Endothelial cell of umbilical vein (primary cell): ENCODE measurements at regions of chr14 and their contacts with region 1.

Region 1: GRCh38 chr14:37594238-37594914 is 673 bp downstream of the FOXA1 start:
- DNase-seq: peak; percentile 80
- H3K4me3 ChIP-seq: peak overlapping the region; percentile 30 to 62 (median 41)
- H3K27ac ChIP-seq: no peak overlapping the region
- H3K4me1 ChIP-seq: peaks cover 4% of the 10 kb centered on the region
- H3K27me3 ChIP-seq: peaks cover 73 to 88% of the 10 kb centered on the region in 2 experiments
- CTCF ChIP-seq: peak; percentile 81 to 89
- POLR2A ChIP-seq: no peak

Region 2: DNA sequence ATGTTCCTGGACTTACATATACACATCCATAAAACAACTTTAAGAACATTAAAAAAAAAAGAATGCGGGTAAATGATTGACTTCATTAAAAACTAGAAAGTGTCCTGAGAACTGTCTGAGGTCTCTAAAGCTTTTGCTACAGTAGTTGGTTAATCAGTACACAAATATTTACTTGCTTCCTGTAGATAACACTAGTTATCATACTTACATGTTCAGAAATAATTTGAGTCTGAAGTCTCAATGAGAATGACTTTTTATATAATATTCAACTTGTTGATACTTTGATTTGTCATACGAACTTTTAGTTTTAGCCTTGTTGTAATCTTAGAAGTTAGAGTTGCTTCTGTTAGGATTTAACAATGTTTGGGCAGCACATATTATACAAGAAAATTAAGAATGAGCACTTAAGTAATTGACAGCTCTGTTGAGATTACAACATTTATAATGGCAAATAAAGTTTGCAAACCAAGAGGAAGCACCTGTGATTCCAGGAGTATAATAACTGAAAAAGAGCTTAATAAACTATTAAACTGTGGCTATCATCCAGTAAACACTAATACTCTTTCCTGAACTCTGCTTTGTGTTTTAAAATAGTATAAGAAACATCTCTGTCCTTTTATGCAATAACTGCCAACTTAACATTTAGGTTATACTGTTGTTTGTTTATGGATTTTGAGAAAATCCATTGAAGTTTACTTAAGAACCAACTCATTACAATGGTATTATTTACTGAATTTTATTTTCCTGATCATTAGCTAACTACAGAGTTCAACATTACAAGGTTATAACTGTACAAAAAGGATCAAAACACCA is 265.0 kb before region 1 on chr14:
- CTCF ChIA-PET with region 1: no interaction called
- POLR2A ChIA-PET with region 1: no interaction called
- dilution Hi-C with region 1: no loop called
- intact Hi-C with region 1: no loop called
- DNase-seq: peak; percentile 72
- H3K4me3 ChIP-seq: no peak overlapping the region
- H3K27ac ChIP-seq: no peak overlapping the region
- H3K4me1 ChIP-seq: peaks cover 7% of the 10 kb centered on the region
- H3K27me3 ChIP-seq: no peaks in the 10 kb centered on the region
- CTCF ChIP-seq: no peak
- POLR2A ChIP-seq: no peak

Region 3: DNA sequence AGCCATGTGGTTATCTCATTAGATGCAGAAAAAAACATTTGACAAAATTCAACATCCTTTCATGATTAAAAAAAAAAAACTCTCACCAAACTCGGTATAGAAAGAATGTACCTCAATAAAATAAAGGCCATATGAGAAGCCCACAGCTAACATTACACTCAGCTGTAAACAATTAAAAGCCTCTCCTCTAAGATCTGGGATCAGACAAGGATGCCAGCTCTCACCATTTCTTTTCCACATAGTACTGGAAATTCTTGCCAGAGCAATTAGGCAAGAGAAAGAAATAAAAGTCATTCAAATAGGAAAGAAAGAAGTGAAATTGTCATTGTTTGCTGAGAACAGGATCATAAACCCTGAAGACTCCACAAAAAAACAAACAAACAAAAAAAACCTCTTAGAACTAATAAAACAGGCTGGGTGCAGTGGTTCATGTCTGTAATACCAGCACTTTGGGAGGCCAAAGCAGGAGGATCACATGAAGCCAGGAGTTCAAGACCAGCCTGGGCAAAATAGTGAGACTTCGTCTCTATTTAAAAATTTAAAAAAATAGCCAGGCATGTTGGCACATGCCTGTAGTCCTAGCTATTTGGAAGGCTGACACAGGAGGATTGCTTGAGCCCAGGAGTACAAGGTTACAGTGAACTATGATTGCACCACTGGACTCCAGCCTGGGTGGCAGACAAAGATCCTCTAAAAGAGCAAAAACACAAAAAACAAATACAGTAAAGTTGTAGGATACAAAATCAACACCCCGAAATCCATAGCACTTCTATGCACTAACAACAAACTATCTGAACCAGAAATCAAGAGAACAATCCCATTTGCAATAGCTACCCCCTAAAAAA is 113.7 kb before region 1 on chr14:
- CTCF ChIA-PET with region 1: no interaction called
- POLR2A ChIA-PET with region 1: no interaction called
- dilution Hi-C with region 1: no loop called
- intact Hi-C with region 1: no loop called
- DNase-seq: no peak
- H3K4me3 ChIP-seq: no peak overlapping the region
- H3K27ac ChIP-seq: no peak overlapping the region
- H3K4me1 ChIP-seq: no peaks in the 10 kb centered on the region
- H3K27me3 ChIP-seq: no peaks in the 10 kb centered on the region
- CTCF ChIP-seq: no peak
- POLR2A ChIP-seq: no peak

Region 4: GRCh38 chr14:37623423-37623951 is 29.1 kb after region 1 on chr14:
- CTCF ChIA-PET with region 1: interaction called, 12 read pairs
- POLR2A ChIA-PET with region 1: no interaction called
- dilution Hi-C with region 1: no loop called
- intact Hi-C with region 1: no loop called
- DNase-seq: peak; percentile 29
- H3K4me3 ChIP-seq: no peak overlapping the region
- H3K27ac ChIP-seq: no peak overlapping the region
- H3K4me1 ChIP-seq: no peaks in the 10 kb centered on the region
- H3K27me3 ChIP-seq: no peaks in the 10 kb centered on the region
- CTCF ChIP-seq: no peak
- POLR2A ChIP-seq: no peak

Region 5: DNA sequence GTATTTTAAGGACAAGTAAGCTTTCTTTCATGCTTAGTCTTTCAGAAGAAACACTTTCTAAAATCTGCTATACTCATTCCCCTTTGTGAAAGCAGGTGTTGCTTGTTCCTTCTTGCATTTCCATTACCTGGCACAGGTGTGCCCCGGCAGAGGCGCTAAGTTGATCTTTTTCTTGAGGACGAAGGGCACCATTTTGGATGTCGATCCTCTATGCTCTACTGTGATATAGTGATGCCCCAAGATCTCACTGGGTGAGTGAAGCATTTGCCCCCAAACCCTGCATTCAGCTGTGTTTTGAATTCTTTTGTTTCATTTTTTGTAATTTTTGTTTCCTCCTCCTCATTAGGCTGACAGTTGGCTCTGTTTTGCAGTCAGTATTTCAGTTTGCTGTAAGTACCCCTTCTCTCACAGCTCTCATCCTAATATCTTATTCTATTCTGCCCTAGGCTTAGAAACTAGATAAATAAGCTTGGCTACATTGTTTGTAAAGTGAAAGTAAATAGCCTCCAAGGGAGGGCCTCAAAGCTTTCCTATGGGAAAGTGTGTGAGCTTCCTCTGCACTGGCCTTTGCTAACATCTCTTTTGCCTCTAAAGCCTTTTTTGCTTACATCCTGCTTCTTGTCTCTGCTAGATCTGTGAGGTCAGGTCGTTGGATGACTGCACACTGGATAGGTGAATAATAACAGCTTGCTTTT is 55.8 kb after region 1 on chr14:
- CTCF ChIA-PET with region 1: no interaction called
- POLR2A ChIA-PET with region 1: no interaction called
- dilution Hi-C with region 1: no loop called
- intact Hi-C with region 1: no loop called
- DNase-seq: no peak
- H3K4me3 ChIP-seq: no peak overlapping the region
- H3K27ac ChIP-seq: no peak overlapping the region
- H3K4me1 ChIP-seq: no peaks in the 10 kb centered on the region
- H3K27me3 ChIP-seq: peaks cover 2 to 4% of the 10 kb centered on the region in 2 experiments
- CTCF ChIP-seq: no peak
- POLR2A ChIP-seq: no peak